ENCODE measurements at regions of chr5 and their contacts with region 1.

Region 1: GRCh38 chr5:177113566-177114424 is 19.8 kb upstream of the NSD1 start:
- DNase-seq: peak; percentile 75 to 91
- ATAC-seq: peak; percentile 62 to 81 (median 76)
- H3K4me3 ChIP-seq: no peak overlapping the region
- H3K4me3 Mint-ChIP-seq: peak overlapping the region; percentile 43
- H3K27ac ChIP-seq: no peak overlapping the region
- H3K27ac Mint-ChIP-seq: peak overlapping the region in 1 of 2 donors; percentile 7
- H3K4me1 ChIP-seq: peaks cover 23% of the 10 kb centered on the region
- H3K4me1 Mint-ChIP-seq: peaks cover 20% of the 10 kb centered on the region in 2 donors
- H3K27me3 ChIP-seq: no peaks in the 10 kb centered on the region
- H3K27me3 Mint-ChIP-seq: peaks cover 0 to 2% of the 10 kb centered on the region in 2 donors
- CTCF ChIP-seq: peak; percentile 99

Region 2: GRCh38 chr5:176660860-176661641 is 452.7 kb before region 1 on chr5:
- intact Hi-C with region 1: loop called (anchors 5 kb)
- DNase-seq: peak; percentile 80 to 92
- ATAC-seq: peak; percentile 71 to 78 (median 77)
- H3K4me3 ChIP-seq: no peak overlapping the region
- H3K4me3 Mint-ChIP-seq: peak overlapping the region; percentile 40
- H3K27ac ChIP-seq: no peak overlapping the region
- H3K27ac Mint-ChIP-seq: peak overlapping the region in 1 of 2 donors; percentile 27
- H3K4me1 ChIP-seq: peaks cover 32% of the 10 kb centered on the region
- H3K4me1 Mint-ChIP-seq: peaks cover 19 to 34% of the 10 kb centered on the region in 2 donors
- H3K27me3 ChIP-seq: no peaks in the 10 kb centered on the region
- H3K27me3 Mint-ChIP-seq: peaks cover 12 to 18% of the 10 kb centered on the region in 2 donors
- CTCF ChIP-seq: peak; percentile 92

Region 3: DNA sequence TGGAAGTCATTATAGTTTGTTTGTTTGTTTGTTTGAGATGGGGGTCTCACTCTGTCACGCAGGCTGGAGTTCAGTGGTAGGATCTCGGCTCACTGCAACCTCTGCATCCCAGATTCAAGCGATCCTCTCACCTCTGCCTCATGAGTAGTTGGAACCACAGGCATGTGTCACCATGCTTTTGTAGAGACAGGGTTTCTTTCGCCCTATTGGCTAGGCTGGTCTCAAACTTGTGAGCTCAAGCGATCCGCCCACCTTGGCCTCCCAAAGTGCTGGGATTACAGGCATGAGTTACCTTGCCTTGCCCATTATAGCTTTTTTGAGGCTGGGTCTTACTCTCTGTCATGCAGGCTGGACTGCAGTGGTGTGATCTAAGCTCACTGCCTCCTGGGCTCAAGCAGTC is 48.6 kb after region 1 on chr5:
- intact Hi-C with region 1: no loop called
- DNase-seq: no peak
- ATAC-seq: no peak
- H3K4me3 ChIP-seq: no peak overlapping the region
- H3K4me3 Mint-ChIP-seq: no peak overlapping the region
- H3K27ac ChIP-seq: no peak overlapping the region
- H3K27ac Mint-ChIP-seq: no peak overlapping the region
- H3K4me1 ChIP-seq: no peaks in the 10 kb centered on the region
- H3K4me1 Mint-ChIP-seq: peaks cover 6 to 22% of the 10 kb centered on the region in 2 donors
- H3K27me3 ChIP-seq: no peaks in the 10 kb centered on the region
- H3K27me3 Mint-ChIP-seq: no peaks in the 10 kb centered on the region
- CTCF ChIP-seq: no peak

Region 4: DNA sequence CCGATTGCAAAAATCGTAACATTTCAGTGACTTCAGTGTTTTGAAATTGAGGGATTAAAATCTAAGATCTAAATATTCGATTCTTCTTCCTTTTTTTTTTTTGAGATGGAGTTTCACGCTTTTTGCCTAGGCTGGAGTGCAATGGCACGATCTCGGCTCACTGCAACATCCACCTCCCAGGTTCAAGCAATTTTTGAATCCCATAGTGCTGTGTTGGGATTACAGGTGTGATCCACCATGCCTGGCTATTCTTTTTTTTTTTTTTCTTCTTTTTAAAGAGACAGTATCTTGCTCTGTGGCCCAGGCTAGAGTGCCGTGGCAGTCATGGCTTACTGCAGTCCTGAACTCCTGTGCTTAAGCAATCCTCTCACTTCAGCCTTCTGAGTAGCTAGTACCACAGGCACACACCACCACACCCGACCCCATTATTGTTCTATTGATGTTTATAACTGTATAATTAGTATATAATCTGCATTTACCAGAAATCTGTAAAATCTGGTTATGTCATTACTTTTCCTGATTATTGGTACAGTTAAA is 62.4 kb after region 1 on chr5:
- intact Hi-C with region 1: loop called (anchors 10 kb)
- DNase-seq: no peak
- ATAC-seq: no peak
- H3K4me3 ChIP-seq: no peak overlapping the region
- H3K4me3 Mint-ChIP-seq: no peak overlapping the region
- H3K27ac ChIP-seq: no peak overlapping the region
- H3K27ac Mint-ChIP-seq: peak overlapping the region in 1 of 2 donors; percentile 71
- H3K4me1 ChIP-seq: no peaks in the 10 kb centered on the region
- H3K4me1 Mint-ChIP-seq: peaks cover 20 to 30% of the 10 kb centered on the region in 2 donors
- H3K27me3 ChIP-seq: no peaks in the 10 kb centered on the region
- H3K27me3 Mint-ChIP-seq: no peaks in the 10 kb centered on the region
- CTCF ChIP-seq: no peak

Region 5: GRCh38 chr5:177303121-177303924 is 189.5 kb after region 1 on chr5 and contains the starts of genes PRELID1 and RAB24:
- intact Hi-C with region 1: loop called (anchors 5 kb)
- DNase-seq: peak; percentile 92
- ATAC-seq: peak; percentile 57 to 82 (median 76)
- H3K4me3 ChIP-seq: peak within 1 kb of the TSS; percentile 93
- H3K4me3 Mint-ChIP-seq: peak within 1 kb of the TSS; percentile 92
- H3K27ac ChIP-seq: peak within 1 kb of the TSS; percentile 76
- H3K27ac Mint-ChIP-seq: peak within 1 kb of the TSS; percentile 89 to 96
- H3K4me1 ChIP-seq: peaks cover 89% of the 10 kb centered on the region
- H3K4me1 Mint-ChIP-seq: peaks cover 72 to 80% of the 10 kb centered on the region in 2 donors
- H3K27me3 ChIP-seq: no peaks in the 10 kb centered on the region
- H3K27me3 Mint-ChIP-seq: no peaks in the 10 kb centered on the region
- CTCF ChIP-seq: peak; percentile 44
- total RNA-seq, gene PRELID1: 76.6 to 99.3 (median 91.6) TPM
- total RNA-seq, gene RAB24: 42.5 to 55.4 (median 49.5) TPM

Region 6: DNA sequence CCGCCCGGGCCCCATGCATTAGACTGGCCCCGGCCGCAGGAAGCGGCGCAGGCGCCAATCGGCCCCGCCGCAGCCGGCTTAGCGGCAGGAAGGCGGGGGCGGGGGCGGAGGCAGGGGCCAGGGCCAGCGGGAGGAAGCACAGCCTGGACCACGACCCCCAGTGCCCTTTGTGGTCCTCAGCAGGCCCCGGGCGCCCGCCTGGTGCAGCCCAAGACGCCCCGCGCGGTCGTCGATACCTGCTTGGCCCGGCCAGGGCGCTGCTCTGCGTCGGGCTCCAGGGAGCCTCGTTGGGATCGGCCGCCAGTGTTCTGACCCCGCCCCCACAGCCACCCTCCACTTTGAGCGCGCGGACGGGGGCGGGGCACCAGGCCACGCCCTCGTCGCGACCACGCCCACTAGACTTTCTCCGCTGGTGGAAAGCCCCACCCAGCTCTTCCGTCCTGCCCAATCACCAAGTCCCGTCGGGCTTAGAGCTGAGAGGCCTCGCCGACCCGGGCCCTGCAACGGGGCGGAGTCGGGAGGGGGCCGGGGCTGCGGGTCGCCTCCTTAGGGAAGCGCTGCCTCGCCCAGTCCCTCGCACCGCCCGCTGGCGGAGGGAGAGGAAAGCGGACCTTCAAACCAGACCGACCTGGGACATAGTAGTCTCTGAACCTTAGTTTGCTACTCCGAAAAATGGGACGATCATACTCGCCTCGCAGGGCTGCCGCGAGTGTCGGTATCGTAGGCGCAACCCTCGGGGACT is 383.7 kb after region 1 on chr5 and contains the start of gene PDLIM7:
- intact Hi-C with region 1: loop called (anchors 10 kb)
- DNase-seq: peak; percentile 90 to 97
- ATAC-seq: peak; percentile 88 to 94 (median 89)
- H3K4me3 ChIP-seq: peak within 1 kb of the TSS; percentile 47
- H3K4me3 Mint-ChIP-seq: peak within 1 kb of the TSS; percentile 82
- H3K27ac ChIP-seq: no peak within 1 kb of the TSS
- H3K27ac Mint-ChIP-seq: peak within 1 kb of the TSS; percentile 47 to 56
- H3K4me1 ChIP-seq: peaks cover 72% of the 10 kb centered on the region
- H3K4me1 Mint-ChIP-seq: peaks cover 18 to 55% of the 10 kb centered on the region in 2 donors
- H3K27me3 ChIP-seq: peaks cover 5% of the 10 kb centered on the region
- H3K27me3 Mint-ChIP-seq: peaks cover 10 to 14% of the 10 kb centered on the region in 2 donors
- CTCF ChIP-seq: no peak
- total RNA-seq, gene PDLIM7: 9.7 to 58.7 (median 14.7) TPM

Measured in natural killer cell (primary cell).